HEK293 (cell line): ENCODE measurements at regions of chr17 and their contacts with region 1.

Region 1: DNA sequence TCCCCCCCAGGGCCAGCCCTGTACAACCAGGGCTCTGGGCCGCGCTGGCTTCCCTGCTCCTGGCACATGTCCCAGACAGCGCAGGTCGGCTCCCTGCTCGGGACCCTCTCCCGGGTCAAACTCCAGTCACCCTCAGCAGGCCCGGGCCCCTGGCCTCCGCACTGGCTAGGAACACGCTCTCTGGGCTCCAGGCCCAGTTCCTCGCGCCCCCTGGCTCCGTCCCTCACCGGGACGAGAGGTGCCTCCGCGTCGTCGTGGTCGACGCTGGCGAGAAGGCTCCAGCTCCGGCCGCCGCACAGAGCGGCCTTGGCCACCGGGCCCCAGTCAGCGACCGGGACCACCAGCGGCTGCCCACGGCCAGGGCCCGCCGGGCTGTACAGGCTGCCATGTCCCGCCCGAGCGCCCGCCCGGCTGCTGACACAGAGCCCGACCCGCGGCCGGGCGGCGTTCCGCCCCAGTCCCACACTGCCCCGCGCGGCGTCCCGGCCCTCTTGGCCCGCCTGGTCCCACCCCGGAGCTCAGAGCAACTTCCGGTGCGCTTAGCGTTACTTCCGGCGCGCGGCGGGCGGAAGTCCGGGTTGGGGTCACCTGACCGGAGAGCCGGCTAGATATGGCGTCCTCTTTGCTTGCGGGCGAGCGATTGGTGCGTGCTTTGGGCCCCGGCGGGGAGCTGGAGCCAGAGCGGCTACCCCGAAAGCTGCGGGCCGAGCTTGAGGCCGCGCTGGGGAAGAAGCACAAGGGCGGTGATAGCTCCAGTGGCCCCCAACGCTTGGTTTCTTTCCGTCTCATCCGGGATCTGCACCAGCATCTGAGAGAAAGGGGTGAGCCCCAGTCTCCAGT is at the start of gene POLDIP2:
- H3K4me3 ChIP-seq: peak within 1 kb of the TSS; percentile 90
- H3K27ac ChIP-seq: peak within 1 kb of the TSS; percentile 85
- H3K4me1 ChIP-seq: peaks cover 6% of the 10 kb centered on the region
- CTCF ChIP-seq: no peak

Region 2: GRCh38 chr17:28346746-28347246 is 10.5 kb before region 1 on chr17:
- CTCF ChIA-PET with region 1: interaction called, 5 read pairs
- POLR2A ChIA-PET with region 1: interaction called, 26 read pairs
- H3K4me3 ChIP-seq: no peak overlapping the region
- H3K27ac ChIP-seq: 0 out of 2 replicates have a peak overlapping the region, but pooled peaks have one; percentile 22
- H3K4me1 ChIP-seq: no peaks in the 10 kb centered on the region
- CTCF ChIP-seq: no peak

Region 3: DNA sequence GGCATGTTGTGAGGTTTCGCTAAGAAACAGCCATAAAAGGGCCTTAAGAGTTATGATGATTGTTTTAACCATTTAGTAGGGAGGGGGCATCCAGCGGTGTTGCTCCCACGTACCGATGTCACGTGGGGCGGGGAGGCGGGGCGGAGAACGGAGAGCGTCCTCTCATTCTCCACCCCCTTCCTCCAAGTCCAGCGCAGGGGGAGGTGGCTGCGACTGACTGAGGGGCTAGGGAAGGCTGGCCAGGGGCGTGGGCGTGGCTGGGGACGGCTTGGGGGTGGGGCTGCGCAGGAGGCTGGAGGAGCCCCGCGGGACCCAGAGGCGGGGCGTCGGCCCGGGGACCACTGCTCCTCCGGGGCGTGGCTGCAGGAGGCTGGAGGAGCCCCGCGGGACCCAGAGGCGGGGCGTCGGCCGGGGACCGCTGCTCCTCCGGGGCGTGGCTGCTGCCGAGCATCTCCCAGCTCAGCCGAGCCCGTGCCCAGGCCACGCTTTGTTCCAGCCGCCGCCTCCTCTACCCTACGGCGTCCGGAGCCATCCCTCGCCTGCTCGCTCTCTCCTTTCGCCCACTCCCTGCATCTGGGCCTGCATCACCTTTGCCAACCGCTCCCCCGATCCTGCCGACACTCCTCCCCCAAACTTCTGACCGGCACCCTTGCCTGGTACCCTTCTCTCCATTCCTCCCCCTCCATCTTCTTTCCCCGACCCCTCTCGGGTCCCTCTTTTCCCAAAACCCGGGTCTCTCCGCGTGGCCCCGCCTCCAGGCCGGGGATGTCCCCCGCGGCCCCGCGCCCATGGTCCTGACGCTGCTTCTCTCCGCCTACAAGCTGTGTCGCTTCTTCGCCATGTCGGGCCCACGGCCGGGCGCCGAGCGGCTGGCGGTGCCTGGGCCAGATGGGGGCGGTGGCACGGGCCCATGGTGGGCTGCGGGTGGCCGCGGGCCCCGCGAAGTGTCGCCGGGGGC is 14.2 kb after region 1 on chr17 and contains the start of gene SARM1:
- CTCF ChIA-PET with region 1: interaction called, 10 read pairs
- POLR2A ChIA-PET with region 1: interaction called, 66 read pairs
- H3K4me3 ChIP-seq: peak within 1 kb of the TSS; percentile 50
- H3K27ac ChIP-seq: peak within 1 kb of the TSS; percentile 87
- H3K4me1 ChIP-seq: peaks cover 13% of the 10 kb centered on the region
- CTCF ChIP-seq: 0 out of 2 replicates have a peak, but pooled peaks have one; percentile 23

Region 4: DNA sequence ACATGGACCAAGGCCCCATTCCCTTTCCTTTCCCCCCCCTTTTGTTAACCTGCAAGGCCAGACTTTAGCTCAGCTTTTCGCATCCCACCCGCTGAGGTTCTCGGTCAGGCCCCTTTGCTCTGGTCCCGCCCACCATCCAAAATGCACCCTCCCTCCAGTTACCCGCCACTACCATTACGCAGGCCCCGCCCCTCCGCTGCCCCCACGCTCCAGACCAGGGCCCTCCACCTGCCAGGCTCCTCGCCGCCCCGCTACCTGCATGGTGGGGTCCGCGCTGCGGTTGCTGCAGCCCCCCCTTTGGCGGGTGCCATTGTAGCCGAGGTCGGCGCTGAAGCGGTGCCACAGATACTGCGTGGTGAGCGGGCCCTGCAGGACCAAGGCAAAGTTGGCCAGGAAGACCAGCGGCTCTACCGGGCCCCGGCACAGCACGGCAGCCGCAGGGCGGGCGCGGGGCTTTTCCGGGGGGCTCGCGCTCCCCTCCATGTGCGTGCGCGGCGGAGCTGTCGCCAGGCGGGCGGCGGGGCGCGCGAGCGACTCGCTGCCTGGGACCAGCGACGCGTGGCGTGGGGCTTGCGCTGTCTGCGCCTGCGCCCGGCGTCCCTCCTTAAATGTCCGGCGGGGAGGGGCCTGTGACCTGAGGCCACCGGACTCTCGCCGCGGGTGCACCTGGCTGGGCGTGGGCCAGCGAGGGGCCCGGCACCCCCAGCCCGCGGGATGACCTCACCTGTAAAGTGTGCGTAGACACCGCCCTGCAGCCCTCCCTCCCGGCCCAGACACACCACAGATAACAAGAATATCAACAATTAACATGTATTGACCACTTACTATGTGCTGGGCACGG is 48.6 kb after region 1 on chr17 and contains the start of gene SLC46A1:
- CTCF ChIA-PET with region 1: interaction called, 3 read pairs
- POLR2A ChIA-PET with region 1: interaction called, 10 read pairs
- H3K4me3 ChIP-seq: peak within 1 kb of the TSS; percentile 80
- H3K27ac ChIP-seq: peak within 1 kb of the TSS; percentile 79; the same call in 1 of the 2 replicates
- H3K4me1 ChIP-seq: no peaks in the 10 kb centered on the region
- CTCF ChIP-seq: no peak